ENCODE measurements at regions of chr11 and their contacts with region 1.

Region 1: DNA sequence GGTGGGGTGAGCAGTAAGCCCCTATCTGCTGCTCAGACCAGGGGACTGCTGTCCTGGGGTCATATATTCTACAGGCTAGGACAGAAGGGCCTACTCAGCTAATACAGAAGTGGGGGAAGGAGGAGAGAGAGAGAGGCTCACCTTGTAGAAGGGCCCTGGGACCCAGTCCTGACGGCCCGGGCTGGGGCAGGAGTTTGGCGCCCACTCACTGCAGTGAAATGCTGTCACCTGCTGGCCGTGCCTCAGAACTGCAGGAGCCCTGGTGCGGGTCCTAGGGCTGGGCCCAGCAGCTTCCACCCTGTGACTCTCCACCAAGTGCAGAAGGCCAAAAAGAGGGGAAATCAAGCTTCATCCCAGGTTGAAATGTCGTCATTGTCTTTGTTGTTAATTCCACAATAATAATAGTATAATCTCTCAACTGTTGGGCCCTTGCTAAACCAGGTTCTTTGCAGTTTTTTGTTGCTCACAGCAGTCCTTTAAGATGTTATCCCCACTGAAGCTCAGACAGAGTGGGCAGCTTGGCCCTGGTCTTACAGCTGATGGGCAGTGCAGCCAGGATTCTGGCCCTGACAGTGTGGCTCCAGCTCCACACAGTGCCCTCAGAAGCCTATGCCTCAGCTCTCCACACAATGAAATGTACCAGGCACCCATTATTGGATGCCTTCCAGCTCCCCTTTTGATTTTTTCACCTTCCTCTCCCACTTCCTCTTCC is 29.6 kb downstream of the TRIM29 start:
- DNase-seq: peak; percentile 78 to 91
- H3K4me3 ChIP-seq: no peak overlapping the region
- H3K4me3 Mint-ChIP-seq: no peak overlapping the region
- H3K27ac Mint-ChIP-seq: no peak overlapping the region
- H3K4me1 ChIP-seq: peaks cover 4% of the 10 kb centered on the region; the same call in 1 of the 2 replicates
- H3K4me1 Mint-ChIP-seq: no peaks in the 10 kb centered on the region
- H3K27me3 ChIP-seq: no peaks in the 10 kb centered on the region
- H3K27me3 Mint-ChIP-seq: peaks cover 17% of the 10 kb centered on the region
- CTCF ChIP-seq: peak; percentile 100

Region 2: GRCh38 chr11:119641983-119642745 is 466.1 kb before region 1 on chr11:
- CTCF ChIA-PET with region 1: interaction called, 9 read pairs
- POLR2A ChIA-PET with region 1: no interaction called
- intact Hi-C with region 1: loop called (anchors 1 kb)
- DNase-seq: peak in 1 of 2 experiments; percentile 59
- H3K4me3 ChIP-seq: no peak overlapping the region
- H3K4me3 Mint-ChIP-seq: no peak overlapping the region
- H3K27ac Mint-ChIP-seq: no peak overlapping the region
- H3K4me1 ChIP-seq: no peaks in the 10 kb centered on the region
- H3K4me1 Mint-ChIP-seq: no peaks in the 10 kb centered on the region
- H3K27me3 ChIP-seq: no peaks in the 10 kb centered on the region
- H3K27me3 Mint-ChIP-seq: no peaks in the 10 kb centered on the region
- CTCF ChIP-seq: peak; percentile 83 to 85

Region 3: DNA sequence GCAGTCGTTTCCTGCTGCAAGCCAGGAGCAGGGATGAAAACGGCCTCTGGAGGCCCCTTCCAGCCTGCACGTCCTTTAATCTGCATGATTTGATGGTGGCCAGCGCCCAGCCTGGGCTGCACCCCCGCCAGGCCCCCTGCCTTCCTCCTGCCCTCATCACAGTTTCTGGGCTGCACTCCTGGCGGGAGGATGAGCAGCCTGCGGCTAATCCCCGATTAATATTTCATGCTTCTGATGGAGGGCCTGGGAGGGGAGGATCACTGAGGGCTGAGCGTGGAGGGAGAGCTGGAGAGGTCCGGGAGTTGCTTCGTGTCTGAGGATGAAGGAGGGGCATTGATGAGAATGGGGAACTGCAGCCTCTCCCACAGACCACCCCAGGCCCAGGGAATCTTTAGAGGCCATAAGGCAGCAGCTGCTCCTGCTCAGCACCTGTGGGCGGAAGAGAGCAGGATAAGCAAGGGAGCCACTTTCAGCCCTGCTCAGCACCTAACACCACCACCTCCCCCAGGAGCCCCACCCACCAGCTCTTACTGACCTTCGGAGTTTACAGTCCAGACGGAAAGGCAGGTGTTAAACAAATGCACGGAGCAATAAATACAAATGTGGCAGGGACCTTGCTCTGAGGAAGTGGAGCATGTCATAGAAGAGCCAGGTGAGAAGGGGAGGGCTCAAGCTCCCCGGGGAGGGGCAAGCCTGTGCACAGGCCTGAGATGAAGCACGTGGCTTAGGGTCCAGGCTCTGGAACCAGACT is 244.3 kb before region 1 on chr11:
- CTCF ChIA-PET with region 1: interaction called, 4 read pairs
- POLR2A ChIA-PET with region 1: no interaction called
- intact Hi-C with region 1: loop called (anchors 2 kb)
- DNase-seq: peak; percentile 92 to 97
- H3K4me3 ChIP-seq: no peak overlapping the region
- H3K4me3 Mint-ChIP-seq: peak overlapping the region; percentile 27
- H3K27ac Mint-ChIP-seq: peak overlapping the region; percentile 61
- H3K4me1 ChIP-seq: peaks cover 19% of the 10 kb centered on the region
- H3K4me1 Mint-ChIP-seq: peaks cover 20% of the 10 kb centered on the region
- H3K27me3 ChIP-seq: no peaks in the 10 kb centered on the region
- H3K27me3 Mint-ChIP-seq: no peaks in the 10 kb centered on the region
- CTCF ChIP-seq: peak in 1 of 2 experiments; percentile 84

Region 4: GRCh38 chr11:120013325-120014270 is 94.7 kb before region 1 on chr11:
- CTCF ChIA-PET with region 1: interaction called, 3 read pairs
- POLR2A ChIA-PET with region 1: no interaction called
- intact Hi-C with region 1: loop called (anchors 1 kb)
- DNase-seq: peak; percentile 72 to 74
- H3K4me3 ChIP-seq: no peak overlapping the region
- H3K4me3 Mint-ChIP-seq: no peak overlapping the region
- H3K27ac Mint-ChIP-seq: no peak overlapping the region
- H3K4me1 ChIP-seq: peaks cover 7% of the 10 kb centered on the region
- H3K4me1 Mint-ChIP-seq: peaks cover 12% of the 10 kb centered on the region
- H3K27me3 ChIP-seq: peaks cover 3% of the 10 kb centered on the region
- H3K27me3 Mint-ChIP-seq: peaks cover 21% of the 10 kb centered on the region
- CTCF ChIP-seq: peak; percentile 89 to 96

Measured in Caco-2 (cell line).